AG04450 (cell line): ENCODE measurements at regions of chr2 and their contacts with region 1.

Region 1: GRCh38 chr2:18178736-18179349 is 300.4 kb downstream of the KCNS3 start:
- DNase-seq: peak; percentile 15
- H3K4me3 ChIP-seq: no peak overlapping the region
- H3K27ac ChIP-seq: no peak overlapping the region
- H3K27me3 ChIP-seq: no peaks in the 10 kb centered on the region
- CTCF ChIP-seq: peak; percentile 88

Region 2: GRCh38 chr2:17851731-17852585 is 326.9 kb before region 1 on chr2:
- CTCF ChIA-PET with region 1: interaction called, 13 read pairs
- POLR2A ChIA-PET with region 1: no interaction called
- DNase-seq: peak; percentile 34
- H3K4me3 ChIP-seq: no peak overlapping the region
- H3K27ac ChIP-seq: no peak overlapping the region
- H3K27me3 ChIP-seq: no peaks in the 10 kb centered on the region
- CTCF ChIP-seq: peak; percentile 95